ENCODE measurements at regions of chr19 and their contacts with region 1.

Region 1: DNA sequence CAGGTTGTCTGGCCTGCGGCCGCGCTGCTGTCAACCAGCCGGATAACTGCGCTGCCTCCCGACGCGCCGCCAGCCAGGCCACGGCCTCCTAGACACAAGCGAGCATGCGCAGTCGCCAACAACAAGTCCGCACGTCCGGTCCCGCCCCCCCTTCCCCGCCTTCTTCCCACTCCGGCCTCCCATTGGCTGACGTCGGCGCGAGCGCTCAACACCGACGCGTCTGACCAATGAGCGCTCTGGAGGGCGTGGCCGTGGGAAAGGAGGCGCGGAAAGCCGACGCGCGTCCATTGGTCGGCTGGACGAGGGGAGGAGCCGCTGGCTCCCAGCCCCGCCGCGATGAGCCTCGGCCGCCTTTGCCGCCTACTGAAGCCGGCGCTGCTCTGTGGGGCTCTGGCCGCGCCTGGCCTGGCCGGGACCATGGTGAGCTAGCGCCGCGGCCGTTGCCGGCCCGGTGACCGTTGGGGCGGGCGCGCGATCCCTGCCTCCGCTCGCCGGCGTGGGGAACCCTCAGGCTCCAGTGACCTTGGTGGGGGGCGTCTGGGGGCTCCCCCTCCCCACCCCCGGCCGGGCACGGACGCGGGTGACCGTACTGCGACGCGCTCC is at the start of gene GPX4:
- DNase-seq: peak; percentile 90 to 98 (median 95)
- ATAC-seq: peak; percentile 91
- H3K4me3 ChIP-seq: peak within 1 kb of the TSS; percentile 79
- H3K4me3 Mint-ChIP-seq: peak within 1 kb of the TSS; percentile 66 to 82 (median 78)
- H3K27ac ChIP-seq: peak within 1 kb of the TSS; percentile 100
- H3K27ac Mint-ChIP-seq: peak within 1 kb of the TSS; percentile 79 to 96 (median 93)
- H3K4me1 ChIP-seq: peaks cover 13 to 18% of the 10 kb centered on the region in 2 donors
- H3K4me1 Mint-ChIP-seq: peaks cover 17 to 48% (median 36%) of the 10 kb centered on the region in 7 donors
- H3K27me3 ChIP-seq: no peaks in the 10 kb centered on the region
- H3K27me3 Mint-ChIP-seq: no peaks in the 10 kb centered on the region
- total RNA-seq, gene GPX4: 122 to 235 (median 194) TPM

Region 2: GRCh38 chr19:566403-566802 is 537.4 kb before region 1 on chr19:
- CTCF ChIA-PET with region 1: no interaction called
- POLR2A ChIA-PET with region 1: no interaction called
- intact Hi-C with region 1: no loop called
- DNase-seq: no peak
- ATAC-seq: no peak
- H3K4me3 ChIP-seq: no peak overlapping the region
- H3K4me3 Mint-ChIP-seq: peak overlapping the region in 2 of 10 donors; percentile 44 to 60
- H3K27ac ChIP-seq: no peak overlapping the region
- H3K27ac Mint-ChIP-seq: peak overlapping the region in 2 of 9 donors; percentile 33 to 86
- H3K4me1 ChIP-seq: peaks cover 0 to under 1% of the 10 kb centered on the region in 2 donors
- H3K4me1 Mint-ChIP-seq: peaks cover 6 to 17% (median 13%) of the 10 kb centered on the region in 7 donors
- H3K27me3 ChIP-seq: no peaks in the 10 kb centered on the region
- H3K27me3 Mint-ChIP-seq: peaks cover 0 to 4% (median 0%) of the 10 kb centered on the region in 5 donors

Region 3: DNA sequence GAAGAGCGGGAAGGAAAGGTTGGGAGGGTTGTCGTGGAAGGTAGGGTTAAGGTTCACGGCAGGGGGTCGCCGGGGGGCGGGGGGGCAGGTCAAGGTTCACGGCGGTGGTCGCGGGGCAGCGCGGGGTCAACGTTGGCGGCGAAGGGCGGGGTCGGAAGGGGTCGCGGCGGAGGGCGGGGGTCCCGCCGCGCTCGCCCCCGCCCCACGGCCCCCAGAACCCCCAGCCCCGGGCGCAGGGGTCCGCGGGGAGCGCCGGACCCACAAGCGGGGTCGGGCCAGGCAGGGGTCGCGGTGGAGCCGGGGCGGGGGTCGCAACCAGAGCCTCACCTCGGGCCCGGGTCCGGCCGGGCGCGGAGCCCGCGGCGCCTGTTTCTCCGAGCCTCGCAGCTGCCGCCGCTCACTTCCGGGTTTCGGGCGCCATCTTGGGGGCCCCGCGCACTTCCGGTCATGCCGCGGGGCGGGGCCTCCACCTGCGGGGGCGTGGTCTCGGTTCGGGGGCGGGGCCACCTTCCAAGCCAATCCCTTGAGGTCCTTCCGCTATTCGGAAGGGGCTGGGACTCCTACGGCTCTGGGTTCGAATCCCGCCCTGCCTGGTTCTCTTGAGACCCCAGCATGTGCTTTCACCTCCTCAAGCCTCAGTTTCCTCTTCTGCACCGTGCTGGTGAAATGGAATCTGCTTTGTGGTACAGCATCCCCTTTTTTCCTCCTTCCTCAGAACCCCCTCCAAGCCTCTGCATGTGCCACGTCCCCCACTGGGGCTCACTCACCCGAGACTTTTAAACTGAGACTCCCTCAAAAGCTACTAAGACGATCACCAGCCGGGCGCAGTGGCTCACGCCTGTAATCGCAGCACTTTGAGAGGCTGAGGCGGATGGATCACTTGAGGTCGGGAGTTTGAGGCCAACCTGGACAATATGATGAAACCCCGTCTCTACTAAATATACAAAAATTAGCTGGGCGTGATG is 70.3 kb after region 1 on chr19 and contains the start of gene SBNO2:
- CTCF ChIA-PET with region 1: no interaction called
- POLR2A ChIA-PET with region 1: no interaction called
- intact Hi-C with region 1: loop called in 1 of 2 experiments (anchors 1 kb)
- DNase-seq: peak; percentile 74 to 98 (median 85)
- ATAC-seq: peak; percentile 96
- H3K4me3 ChIP-seq: peak within 1 kb of the TSS; percentile 77
- H3K4me3 Mint-ChIP-seq: peak within 1 kb of the TSS; percentile 80 to 94 (median 88)
- H3K27ac ChIP-seq: peak within 1 kb of the TSS; percentile 87
- H3K27ac Mint-ChIP-seq: peak within 1 kb of the TSS; percentile 89 to 97 (median 94)
- H3K4me1 ChIP-seq: peaks cover 3 to 17% of the 10 kb centered on the region in 2 donors
- H3K4me1 Mint-ChIP-seq: peaks cover 16 to 43% (median 32%) of the 10 kb centered on the region in 7 donors
- H3K27me3 ChIP-seq: no peaks in the 10 kb centered on the region
- H3K27me3 Mint-ChIP-seq: peaks cover 0 to 2% (median 0%) of the 10 kb centered on the region in 5 donors
- total RNA-seq, gene SBNO2: 88.6 to 137 (median 104) TPM

Measured in naive thymus-derived CD4-positive, alpha-beta T cell (primary cell).